Activated CD4-positive, alpha-beta T cell treated with anti-CD3 and anti-CD28 coated beads, Interleukin-2, amount 10 ng/mL, durations not matched to agents 24 days and 14 days (primary cell): ENCODE measurements at regions of chr10 and their contacts with region 1.

Region 1: GRCh38 chr10:132307823-132308587 is at the start of gene STK32C:
- DNase-seq: peak; percentile 94
- H3K4me3 Mint-ChIP-seq: peak within 1 kb of the TSS; percentile 91
- H3K27ac Mint-ChIP-seq: peak within 1 kb of the TSS; percentile 82
- H3K4me1 Mint-ChIP-seq: peaks cover 5% of the 10 kb centered on the region
- H3K27me3 Mint-ChIP-seq: peaks cover 46% of the 10 kb centered on the region
- total RNA-seq, gene STK32C: 15.2 and 18.4 TPM in 2 replicates

Region 2: DNA sequence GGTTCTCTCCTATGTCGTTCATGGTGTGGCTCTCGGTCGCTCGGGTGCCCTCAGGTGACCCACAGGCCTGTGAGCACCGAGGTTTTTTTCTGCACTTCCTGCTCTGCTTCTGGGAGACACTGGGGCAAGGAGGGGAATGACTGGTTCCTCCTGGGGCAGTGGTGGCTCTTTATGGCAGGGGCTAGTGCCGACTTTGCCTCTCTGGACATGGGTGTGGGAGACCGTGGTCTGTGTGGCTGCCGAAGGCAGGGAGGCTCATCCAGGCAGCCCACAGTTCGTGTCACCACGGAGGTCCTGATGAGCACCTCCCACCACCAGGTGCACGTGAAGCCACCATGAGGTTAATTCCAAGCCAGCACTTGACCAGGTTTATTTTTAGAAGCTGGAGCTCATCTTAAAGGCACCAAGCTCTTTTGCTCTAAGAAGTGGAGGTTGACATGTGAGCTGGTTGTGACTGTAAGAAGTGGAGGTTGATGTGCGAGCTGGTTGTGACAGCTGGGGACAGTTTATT is 145.9 kb before region 1 on chr10:
- intact Hi-C with region 1: loop called (anchors 1 kb)
- DNase-seq: peak; percentile 89
- H3K4me3 Mint-ChIP-seq: peak overlapping the region; percentile 83
- H3K27ac Mint-ChIP-seq: peak overlapping the region; percentile 99
- H3K4me1 Mint-ChIP-seq: peaks cover 41% of the 10 kb centered on the region
- H3K27me3 Mint-ChIP-seq: no peaks in the 10 kb centered on the region

Region 3: GRCh38 chr10:132185601-132186487 is 122.2 kb before region 1 on chr10:
- intact Hi-C with region 1: loop called (anchors 1 kb)
- DNase-seq: peak; percentile 93
- H3K4me3 Mint-ChIP-seq: peak overlapping the region; percentile 80
- H3K27ac Mint-ChIP-seq: no peak overlapping the region
- H3K4me1 Mint-ChIP-seq: peaks cover 16% of the 10 kb centered on the region
- H3K27me3 Mint-ChIP-seq: peaks cover 37% of the 10 kb centered on the region

Region 4: GRCh38 chr10:132229834-132230556 is 78.0 kb before region 1 on chr10:
- intact Hi-C with region 1: loop called (anchors 5 kb)
- DNase-seq: peak; percentile 88
- H3K4me3 Mint-ChIP-seq: peak overlapping the region; percentile 82
- H3K27ac Mint-ChIP-seq: peak overlapping the region; percentile 94
- H3K4me1 Mint-ChIP-seq: peaks cover 34% of the 10 kb centered on the region
- H3K27me3 Mint-ChIP-seq: no peaks in the 10 kb centered on the region

Region 5: DNA sequence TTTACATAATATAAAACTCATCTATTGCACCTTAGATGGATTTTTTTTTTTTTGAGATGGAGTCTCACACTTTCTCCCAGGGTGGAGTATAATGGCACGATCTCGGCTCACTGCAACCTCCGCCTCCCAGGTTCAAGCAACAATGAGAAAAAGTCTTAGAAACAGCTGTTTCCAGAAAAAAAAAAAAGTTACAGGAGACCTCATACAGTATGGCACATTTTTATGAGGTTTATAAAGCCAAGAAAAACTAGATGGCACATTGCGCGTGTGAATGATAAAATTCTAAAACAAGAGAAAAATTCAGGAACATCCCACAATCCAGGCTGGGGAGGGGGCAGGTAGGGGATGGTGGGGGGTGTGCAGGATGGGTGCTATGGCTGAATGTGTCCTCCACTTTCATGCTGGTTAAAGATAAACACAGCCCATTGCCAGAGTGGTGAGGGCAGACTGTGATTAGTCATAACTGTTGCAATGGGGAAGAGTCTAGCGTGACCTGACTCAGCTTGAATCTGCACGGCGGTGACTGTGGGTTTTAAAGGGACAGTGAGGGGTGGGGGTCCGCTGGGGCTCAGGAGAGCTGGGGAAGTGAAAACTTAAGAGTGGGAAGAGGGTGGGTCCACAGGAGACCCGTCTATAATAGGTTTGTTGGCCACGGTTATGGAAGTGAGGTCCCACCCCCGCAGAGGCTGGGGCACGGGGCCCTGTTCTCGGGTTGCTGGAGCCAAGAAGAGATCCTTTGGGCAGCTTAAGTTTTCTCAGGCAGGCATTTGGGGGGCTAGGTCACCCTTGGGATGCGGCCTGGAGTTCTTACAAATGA is 12.1 kb after region 1 on chr10:
- intact Hi-C with region 1: no loop called
- DNase-seq: peak; percentile 71
- H3K4me3 Mint-ChIP-seq: no peak overlapping the region
- H3K27ac Mint-ChIP-seq: peak overlapping the region; percentile 67
- H3K4me1 Mint-ChIP-seq: peaks cover 22% of the 10 kb centered on the region
- H3K27me3 Mint-ChIP-seq: peaks cover 6% of the 10 kb centered on the region

Region 6: DNA sequence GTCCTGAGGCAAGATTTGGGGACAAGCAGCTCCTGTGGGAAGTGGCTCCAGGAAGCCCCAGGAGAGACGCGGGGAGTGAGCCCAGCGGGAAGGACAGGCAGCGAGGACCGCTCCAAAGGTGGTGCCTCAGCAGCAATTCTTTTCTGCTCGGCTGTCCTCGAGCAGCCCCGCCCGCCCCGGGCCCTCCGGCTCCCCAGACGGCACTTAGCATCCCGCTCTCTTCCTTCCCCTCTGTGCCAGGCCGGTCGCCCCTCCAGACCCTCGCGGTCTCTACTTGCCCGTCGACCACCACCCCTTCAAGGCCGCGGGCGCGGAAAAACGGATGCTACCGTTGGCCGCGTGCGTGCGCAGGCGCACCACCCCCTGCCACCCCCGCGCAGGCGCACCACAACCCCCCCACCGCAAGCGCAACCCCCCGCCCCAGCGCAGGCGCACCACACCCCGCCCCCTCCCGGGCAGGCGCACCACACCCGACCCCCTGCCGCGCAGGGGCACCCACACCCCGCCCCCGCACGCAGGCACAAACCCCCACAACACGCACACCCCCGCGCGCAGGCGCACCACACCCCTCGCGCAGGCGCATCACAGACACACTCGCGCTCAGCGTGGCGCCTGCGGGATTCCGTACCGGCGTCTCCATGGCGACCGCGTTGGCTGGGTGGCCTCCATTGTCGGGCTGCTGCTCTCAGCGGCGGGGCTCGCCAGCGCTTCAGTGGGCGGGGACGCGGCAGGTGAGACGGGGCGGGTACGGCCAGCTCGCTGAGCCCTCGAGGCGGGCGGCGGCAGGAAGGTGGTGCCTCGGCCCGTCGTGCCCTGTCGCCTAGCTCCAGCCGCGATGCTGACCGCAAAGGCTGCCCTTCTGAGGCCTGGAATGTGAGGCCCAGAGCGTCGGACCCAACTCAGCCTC is 23.8 kb after region 1 on chr10 and contains the start of gene LRRC27:
- intact Hi-C with region 1: loop called (anchors 1 kb)
- DNase-seq: peak; percentile 100
- H3K4me3 Mint-ChIP-seq: peak within 1 kb of the TSS; percentile 88
- H3K27ac Mint-ChIP-seq: peak within 1 kb of the TSS; percentile 96
- H3K4me1 Mint-ChIP-seq: peaks cover 50% of the 10 kb centered on the region
- H3K27me3 Mint-ChIP-seq: peaks cover 4% of the 10 kb centered on the region
- total RNA-seq, gene LRRC27: 2.3 and 3.3 TPM in 2 replicates

Region 7: DNA sequence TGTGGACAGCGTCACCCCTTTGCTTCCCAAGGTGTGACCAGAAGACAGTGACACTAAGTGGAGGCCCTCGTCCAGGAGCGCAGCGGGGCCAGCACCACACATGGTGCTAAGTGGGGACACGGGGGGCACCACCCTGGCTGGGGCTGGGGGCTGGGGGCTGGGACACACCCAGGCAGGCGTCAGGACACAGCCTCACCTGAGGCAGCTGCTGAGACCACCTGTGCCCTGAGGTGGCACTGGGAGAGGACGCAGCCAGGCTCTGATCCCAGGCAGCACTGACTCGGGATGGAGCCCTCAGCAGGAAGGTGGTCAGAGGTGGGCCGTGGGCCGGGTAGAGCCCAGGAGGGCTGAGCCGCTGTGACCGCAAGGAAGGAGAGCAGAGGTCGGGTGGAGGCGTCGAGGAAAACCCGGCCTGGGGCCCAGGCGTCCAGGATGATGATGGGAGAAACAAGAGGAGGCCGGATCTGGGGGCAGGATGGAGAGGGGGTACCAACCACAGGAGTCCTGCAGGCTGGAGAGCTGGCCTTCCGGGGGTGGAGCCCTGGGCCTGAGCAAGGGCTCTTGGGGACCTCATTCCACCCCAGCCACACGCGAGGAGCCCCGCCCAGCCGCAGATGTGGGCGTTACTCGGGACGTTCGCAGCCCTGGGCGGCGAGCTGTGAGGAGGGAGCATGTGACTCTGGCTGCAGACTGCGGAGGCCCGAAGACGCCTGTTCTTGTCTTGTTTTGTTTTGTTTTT is 46.5 kb after region 1 on chr10:
- intact Hi-C with region 1: loop called (anchors 5 kb)
- DNase-seq: no peak
- H3K4me3 Mint-ChIP-seq: no peak overlapping the region
- H3K27ac Mint-ChIP-seq: no peak overlapping the region
- H3K4me1 Mint-ChIP-seq: peaks cover 2% of the 10 kb centered on the region
- H3K27me3 Mint-ChIP-seq: no peaks in the 10 kb centered on the region